PC-9 (cell line): ENCODE measurements at regions of chr18 and their contacts with region 1.

Region 1: GRCh38 chr18:27188309-27188708 is 3.2 kb upstream of the CHST9 start:
- DNase-seq: no peak
- H3K4me3 ChIP-seq: no peak overlapping the region
- H3K27ac ChIP-seq: no peak overlapping the region
- H3K4me1 ChIP-seq: no peaks in the 10 kb centered on the region
- H3K27me3 ChIP-seq: peaks cover 4% of the 10 kb centered on the region; the same call in 1 of the 2 replicates
- CTCF ChIP-seq: no peak

Region 2: GRCh38 chr18:27040796-27041195 is 147.5 kb before region 1 on chr18:
- CTCF ChIA-PET with region 1: no interaction called
- POLR2A ChIA-PET with region 1: interaction called, 17 read pairs
- intact Hi-C with region 1: no loop called
- DNase-seq: no peak
- H3K4me3 ChIP-seq: no peak overlapping the region
- H3K27ac ChIP-seq: no peak overlapping the region
- H3K4me1 ChIP-seq: no peaks in the 10 kb centered on the region
- H3K27me3 ChIP-seq: no peaks in the 10 kb centered on the region
- CTCF ChIP-seq: no peak